Dendritic cell treated with granulocyte-macrophage colony-stimulating factor and Interleukin-4, amounts not matched to agents 40 ng/mL and 50 ng/mL, for 4 days (primary cell): ENCODE measurements at regions of chr3 and their contacts with region 1.

Region 1: DNA sequence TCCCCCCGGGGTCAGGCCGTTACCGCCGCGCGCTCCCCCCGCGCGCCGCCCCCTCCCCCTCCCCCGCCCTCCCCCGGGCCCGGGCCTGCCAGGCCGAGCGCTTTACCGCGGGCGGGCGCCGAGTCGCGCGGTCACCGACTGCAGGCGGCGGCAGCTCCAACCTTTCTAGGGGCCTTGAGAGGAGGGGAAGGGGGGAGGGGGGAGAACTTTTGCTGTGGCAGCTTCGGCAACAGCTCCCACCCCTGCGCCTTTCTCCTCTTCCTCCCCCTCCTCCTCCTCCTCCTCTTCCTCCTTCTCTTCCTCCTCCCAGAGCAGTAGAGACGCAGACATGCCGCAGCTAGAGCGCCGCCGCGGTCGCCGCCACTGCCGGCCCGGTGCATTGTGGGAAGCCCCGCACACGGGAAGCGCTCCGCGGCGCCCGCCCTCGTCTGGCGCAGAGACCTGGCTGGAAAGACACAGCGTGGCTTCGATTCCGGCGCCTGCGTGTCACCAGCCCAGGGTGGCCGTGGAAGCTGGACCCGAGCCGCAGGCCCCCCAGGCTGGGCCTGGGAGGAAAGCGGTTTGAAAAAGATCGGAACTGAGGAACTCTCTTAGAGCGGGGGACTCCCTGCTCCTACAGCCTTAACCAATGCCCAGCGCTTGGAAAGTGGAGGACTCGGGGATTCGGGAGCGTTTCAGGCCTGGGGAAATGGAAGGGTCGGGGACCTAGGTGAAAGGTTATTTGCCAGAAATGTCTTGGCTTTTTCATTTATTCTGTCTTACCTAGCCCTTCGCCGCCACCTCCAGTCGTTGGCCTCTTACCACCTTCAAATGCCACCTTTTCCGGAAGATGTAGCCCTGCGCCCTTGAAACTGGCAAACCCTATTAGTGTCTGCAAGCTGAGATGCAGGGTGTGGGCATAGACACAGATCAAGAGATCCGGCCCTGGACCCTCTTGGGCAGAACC is at the start of gene ZNF148:
- H3K4me3 Mint-ChIP-seq: peak within 1 kb of the TSS; percentile 99
- H3K27ac Mint-ChIP-seq: peak within 1 kb of the TSS; percentile 99
- H3K4me1 Mint-ChIP-seq: peaks cover 33% of the 10 kb centered on the region
- H3K27me3 Mint-ChIP-seq: no peaks in the 10 kb centered on the region

Region 2: GRCh38 chr3:125150525-125151441 is 224.5 kb before region 1 on chr3:
- intact Hi-C with region 1: no loop called
- H3K4me3 Mint-ChIP-seq: no peak overlapping the region
- H3K27ac Mint-ChIP-seq: peak overlapping the region; percentile 55
- H3K4me1 Mint-ChIP-seq: peaks cover 61% of the 10 kb centered on the region
- H3K27me3 Mint-ChIP-seq: no peaks in the 10 kb centered on the region

Region 3: GRCh38 chr3:125310623-125311081 is 64.6 kb before region 1 on chr3:
- intact Hi-C with region 1: loop called (anchors 5 kb)
- H3K4me3 Mint-ChIP-seq: peak overlapping the region; percentile 78
- H3K27ac Mint-ChIP-seq: peak overlapping the region; percentile 81
- H3K4me1 Mint-ChIP-seq: peaks cover 25% of the 10 kb centered on the region
- H3K27me3 Mint-ChIP-seq: no peaks in the 10 kb centered on the region

Region 4: DNA sequence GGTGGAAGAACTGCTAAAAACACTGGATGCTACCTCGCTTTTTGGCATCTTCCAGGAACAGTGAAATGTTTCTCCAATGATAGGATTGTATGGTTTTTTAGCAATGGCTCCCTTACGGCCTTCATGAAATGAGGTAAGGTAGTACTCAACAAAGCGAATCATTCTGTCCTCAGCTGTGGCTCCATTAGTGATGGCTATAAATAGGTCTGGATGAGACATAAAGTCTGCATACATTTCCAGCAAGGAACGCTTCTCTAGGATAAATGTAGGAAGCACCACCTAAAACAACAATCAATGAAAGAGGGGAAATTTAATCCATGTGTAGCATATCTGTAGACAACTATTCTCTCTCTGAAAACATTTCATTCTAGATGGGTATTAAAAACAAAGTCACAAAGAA is 177.1 kb after region 1 on chr3:
- intact Hi-C with region 1: no loop called
- H3K4me3 Mint-ChIP-seq: no peak overlapping the region
- H3K27ac Mint-ChIP-seq: no peak overlapping the region
- H3K4me1 Mint-ChIP-seq: no peaks in the 10 kb centered on the region
- H3K27me3 Mint-ChIP-seq: no peaks in the 10 kb centered on the region